T-cell (primary cell): ENCODE measurements at regions of chr22 and their contacts with region 1.

Region 1: GRCh38 chr22:46013460-46014416 is 36.8 kb upstream of the WNT7B start:
- DNase-seq: peak; percentile 36 to 88 (median 59)
- ATAC-seq: peak; percentile 81 to 95 (median 94)
- H3K4me3 ChIP-seq: peak overlapping the region; percentile 81 to 90
- H3K4me3 Mint-ChIP-seq: peak overlapping the region; percentile 83 to 89 (median 87)
- H3K27ac ChIP-seq: peak overlapping the region; percentile 96
- H3K27ac Mint-ChIP-seq: peak overlapping the region; percentile 85 to 91
- H3K4me1 ChIP-seq: peaks cover 0 to 24% of the 10 kb centered on the region in 2 experiments
- H3K4me1 Mint-ChIP-seq: peaks cover 0 to 8% (median 6%) of the 10 kb centered on the region in 3 donors
- H3K27me3 ChIP-seq: no peaks in the 10 kb centered on the region
- H3K27me3 Mint-ChIP-seq: no peaks in the 10 kb centered on the region

Region 2: DNA sequence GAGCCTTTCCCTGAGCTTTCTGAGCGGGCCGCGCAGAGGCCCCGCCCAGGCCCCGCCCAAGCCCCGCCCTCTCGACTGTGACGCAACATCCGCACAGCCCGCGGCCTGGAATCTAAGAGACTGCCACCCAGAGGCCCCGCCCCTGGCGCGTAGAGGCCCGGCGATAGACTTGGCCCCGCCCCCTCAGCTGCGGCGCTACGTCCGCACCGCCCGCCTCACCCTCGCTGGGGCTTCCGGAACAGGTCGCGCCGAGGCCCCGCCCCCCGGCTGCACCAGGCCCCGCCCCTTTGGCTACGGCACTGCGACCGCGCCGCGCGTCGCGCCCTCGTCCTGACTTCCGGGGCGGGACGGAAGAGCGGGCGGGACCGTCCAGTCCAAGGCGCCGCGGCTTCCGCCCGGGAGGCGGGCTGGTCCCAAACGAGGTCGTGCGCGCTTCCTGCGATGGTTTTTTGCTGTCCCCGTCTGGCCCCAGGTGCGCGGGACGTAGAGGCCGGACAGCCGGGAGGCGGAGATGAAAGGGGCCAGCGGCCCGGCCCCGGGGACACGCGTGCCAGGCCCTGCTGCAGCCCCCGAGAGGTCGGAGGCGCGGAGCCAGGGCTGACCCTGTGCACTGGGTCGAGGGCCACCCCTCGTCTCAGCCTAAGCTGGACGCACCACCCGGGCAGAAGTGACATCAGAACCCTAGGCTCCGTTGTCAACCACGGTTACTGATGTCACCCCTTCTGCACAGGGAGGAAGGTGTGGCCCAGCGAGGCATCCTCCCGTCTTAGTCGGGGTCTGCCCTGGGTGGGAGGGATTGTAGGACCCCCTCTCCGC is 22.2 kb after region 1 on chr22:
- CTCF ChIA-PET with region 1: interaction called in 1 of 2 experiments, 78 read pairs
- POLR2A ChIA-PET with region 1: interaction called in 1 of 2 experiments, 8 read pairs
- DNase-seq: peak; percentile 98 to 100 (median 100)
- ATAC-seq: peak; percentile 86 to 93 (median 91)
- H3K4me3 ChIP-seq: peak overlapping the region; percentile 77 to 79
- H3K4me3 Mint-ChIP-seq: peak overlapping the region; percentile 79 to 84 (median 81)
- H3K27ac ChIP-seq: peak overlapping the region; percentile 97
- H3K27ac Mint-ChIP-seq: peak overlapping the region; percentile 91 to 93
- H3K4me1 ChIP-seq: peaks cover 15 to 17% of the 10 kb centered on the region in 2 experiments
- H3K4me1 Mint-ChIP-seq: peaks cover 11 to 20% (median 20%) of the 10 kb centered on the region in 3 donors
- H3K27me3 ChIP-seq: no peaks in the 10 kb centered on the region
- H3K27me3 Mint-ChIP-seq: no peaks in the 10 kb centered on the region

Region 3: DNA sequence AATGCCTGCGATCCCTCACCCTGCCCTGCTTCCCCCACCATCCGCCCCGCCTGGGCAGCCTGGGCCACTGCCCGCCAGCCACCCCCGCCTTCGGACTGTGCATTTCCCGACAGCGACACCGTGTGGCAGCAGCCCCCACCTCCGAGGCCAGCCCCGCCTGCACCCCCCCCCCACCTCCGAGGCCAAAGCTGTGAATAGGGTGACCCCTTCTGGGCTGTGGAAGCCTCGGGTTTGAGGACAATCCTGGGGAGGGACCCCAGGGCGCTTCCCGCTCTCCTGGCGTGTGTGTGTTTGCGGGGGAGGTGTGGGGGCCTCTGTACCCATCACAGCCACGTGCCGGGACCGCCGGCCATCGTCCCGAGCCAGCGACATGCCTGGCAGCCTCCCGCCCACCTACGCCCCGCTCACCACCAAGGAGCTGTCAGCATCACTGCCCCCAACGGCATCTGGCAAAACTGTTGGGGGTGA is 102.8 kb after region 1 on chr22:
- CTCF ChIA-PET with region 1: interaction called in 1 of 2 experiments, 10 read pairs
- POLR2A ChIA-PET with region 1: no interaction called
- DNase-seq: peak; percentile 59 to 88 (median 80)
- ATAC-seq: peak; percentile 88 to 97 (median 89)
- H3K4me3 ChIP-seq: no peak overlapping the region
- H3K4me3 Mint-ChIP-seq: no peak overlapping the region
- H3K27ac ChIP-seq: no peak overlapping the region
- H3K27ac Mint-ChIP-seq: no peak overlapping the region
- H3K4me1 ChIP-seq: peaks cover 0 to 10% of the 10 kb centered on the region in 2 experiments
- H3K4me1 Mint-ChIP-seq: peaks cover 0 to 3% (median 0%) of the 10 kb centered on the region in 3 donors
- H3K27me3 ChIP-seq: peaks cover 0 to 5% of the 10 kb centered on the region in 2 experiments
- H3K27me3 Mint-ChIP-seq: no peaks in the 10 kb centered on the region